H1 (cell line): ENCODE measurements at regions of chr17 and their contacts with region 1.

Region 1: DNA sequence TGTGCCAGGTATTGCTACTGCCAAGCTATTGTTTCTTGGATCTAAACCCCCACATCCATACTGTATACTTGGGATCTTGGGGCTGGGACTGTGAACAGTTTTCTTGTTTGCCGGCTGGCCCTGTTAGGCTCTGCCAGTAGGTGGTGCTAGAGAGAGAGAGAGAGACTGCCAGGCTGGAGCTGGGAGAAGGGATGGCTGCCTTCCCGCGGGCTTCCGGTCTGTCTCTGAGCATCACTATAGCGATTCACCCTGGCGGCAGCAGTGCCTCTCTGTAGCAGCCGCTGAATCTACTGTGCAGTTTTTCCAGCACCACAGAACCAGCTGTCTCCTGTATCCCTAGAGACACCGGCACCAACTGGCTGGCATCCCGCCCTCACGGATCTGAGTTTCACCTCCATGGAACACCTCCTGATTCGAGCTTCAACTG is 201.2 kb downstream of the UTP18 start:
- DNase-seq: peak; percentile 29 to 85
- H3K4me3 ChIP-seq: no peak overlapping the region
- H3K27ac ChIP-seq: no peak overlapping the region
- H3K4me1 ChIP-seq: no peaks in the 10 kb centered on the region
- H3K27me3 ChIP-seq: no peaks in the 10 kb centered on the region
- CTCF ChIP-seq: peak; percentile 80 to 92 (median 85)
- EP300 ChIP-seq: no peak
- POLR2A ChIP-seq: no peak
- RAD21 ChIP-seq: peak; percentile 59 to 72

Region 2: GRCh38 chr17:51298508-51299371 is 162.9 kb before region 1 on chr17:
- CTCF ChIA-PET with region 1: interaction called, 17 read pairs
- POLR2A ChIA-PET with region 1: no interaction called
- DNase-seq: no peak
- H3K4me3 ChIP-seq: no peak overlapping the region
- H3K27ac ChIP-seq: no peak overlapping the region
- H3K4me1 ChIP-seq: peaks cover 0 to 11% (median 3%) of the 10 kb centered on the region in 4 experiments; a peak in 2 of 7 replicates
- H3K27me3 ChIP-seq: no peaks in the 10 kb centered on the region
- CTCF ChIP-seq: peak in 2 of 3 experiments; percentile 68 to 83; a peak in 3 of 4 replicates
- EP300 ChIP-seq: no peak
- POLR2A ChIP-seq: 0 out of 3 replicates have a peak, but pooled peaks of 1 of the 2 experiments have one; percentile 8
- RAD21 ChIP-seq: peak; percentile 80 to 87

Region 3: GRCh38 chr17:51378059-51378458 is 83.5 kb before region 1 on chr17:
- CTCF ChIA-PET with region 1: no interaction called
- POLR2A ChIA-PET with region 1: no interaction called
- DNase-seq: no peak
- H3K4me3 ChIP-seq: no peak overlapping the region
- H3K27ac ChIP-seq: no peak overlapping the region
- H3K4me1 ChIP-seq: peaks cover 0 to 10% (median 7%) of the 10 kb centered on the region in 4 experiments; a peak in 3 of 7 replicates
- H3K27me3 ChIP-seq: no peaks in the 10 kb centered on the region
- CTCF ChIP-seq: no peak
- EP300 ChIP-seq: no peak
- POLR2A ChIP-seq: no peak
- RAD21 ChIP-seq: no peak

Region 4: DNA sequence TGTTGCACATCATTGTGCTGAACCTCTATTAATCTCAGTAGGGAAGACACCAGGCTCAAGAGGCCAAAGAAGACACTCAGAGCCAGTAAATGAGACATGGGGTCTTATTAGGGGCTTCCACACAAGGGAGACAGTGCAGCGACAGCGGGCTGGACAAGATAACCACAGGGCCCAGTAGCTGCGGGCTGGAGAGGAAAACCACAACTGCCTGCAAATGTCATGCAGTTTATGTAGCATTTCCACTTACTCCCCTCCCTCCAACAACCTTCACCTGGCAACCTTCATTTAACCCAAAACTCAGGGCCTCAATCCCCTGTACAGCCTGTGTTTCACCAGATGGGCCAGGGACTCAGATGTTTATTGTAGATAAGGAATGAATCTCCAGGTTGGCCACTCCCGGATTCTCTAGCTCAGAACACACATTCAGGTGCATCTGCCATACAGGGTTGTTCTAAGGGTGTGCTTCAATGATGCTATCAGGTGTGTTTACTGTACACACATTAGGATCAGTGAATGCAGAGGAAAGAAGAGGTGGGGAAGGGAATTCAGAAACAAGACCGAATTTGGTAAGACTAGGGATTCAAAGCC is 15.6 kb before region 1 on chr17:
- CTCF ChIA-PET with region 1: interaction called, 11 read pairs
- POLR2A ChIA-PET with region 1: no interaction called
- DNase-seq: no peak
- H3K4me3 ChIP-seq: no peak overlapping the region
- H3K27ac ChIP-seq: no peak overlapping the region
- H3K4me1 ChIP-seq: no peaks in the 10 kb centered on the region
- H3K27me3 ChIP-seq: no peaks in the 10 kb centered on the region
- CTCF ChIP-seq: no peak
- EP300 ChIP-seq: no peak
- POLR2A ChIP-seq: no peak
- RAD21 ChIP-seq: no peak

Region 5: GRCh38 chr17:51479303-51479702 is 17.7 kb after region 1 on chr17:
- CTCF ChIA-PET with region 1: interaction called, 45 read pairs
- POLR2A ChIA-PET with region 1: no interaction called
- DNase-seq: no peak
- H3K4me3 ChIP-seq: no peak overlapping the region
- H3K27ac ChIP-seq: no peak overlapping the region
- H3K4me1 ChIP-seq: peaks cover 0 to 2% (median 0%) of the 10 kb centered on the region in 4 experiments; a peak in 2 of 7 replicates
- H3K27me3 ChIP-seq: peaks cover 0 to 1% (median 0%) of the 10 kb centered on the region in 4 experiments; a peak in 1 of 7 replicates
- CTCF ChIP-seq: no peak
- EP300 ChIP-seq: no peak
- POLR2A ChIP-seq: no peak
- RAD21 ChIP-seq: no peak

Region 6: GRCh38 chr17:51540151-51540550 is 78.6 kb after region 1 on chr17:
- CTCF ChIA-PET with region 1: interaction called, 13 read pairs
- POLR2A ChIA-PET with region 1: no interaction called
- DNase-seq: no peak
- H3K4me3 ChIP-seq: no peak overlapping the region
- H3K27ac ChIP-seq: no peak overlapping the region
- H3K4me1 ChIP-seq: peaks cover 0 to 4% (median 0%) of the 10 kb centered on the region in 4 experiments; a peak in 1 of 7 replicates
- H3K27me3 ChIP-seq: no peaks in the 10 kb centered on the region
- CTCF ChIP-seq: peak in 1 of 3 experiments; percentile 15; a peak in 1 of 4 replicates
- EP300 ChIP-seq: no peak
- POLR2A ChIP-seq: no peak
- RAD21 ChIP-seq: peak; percentile 39 to 50

Region 7: GRCh38 chr17:51572115-51572514 is 110.5 kb after region 1 on chr17:
- CTCF ChIA-PET with region 1: no interaction called
- POLR2A ChIA-PET with region 1: no interaction called
- DNase-seq: no peak
- H3K4me3 ChIP-seq: no peak overlapping the region
- H3K27ac ChIP-seq: no peak overlapping the region
- H3K4me1 ChIP-seq: no peaks in the 10 kb centered on the region
- H3K27me3 ChIP-seq: no peaks in the 10 kb centered on the region
- CTCF ChIP-seq: no peak
- EP300 ChIP-seq: no peak
- POLR2A ChIP-seq: no peak
- RAD21 ChIP-seq: no peak

Region 8: GRCh38 chr17:51764387-51764972 is 302.9 kb after region 1 on chr17:
- CTCF ChIA-PET with region 1: no interaction called
- POLR2A ChIA-PET with region 1: no interaction called
- DNase-seq: peak; percentile 61 to 68
- H3K4me3 ChIP-seq: no peak overlapping the region
- H3K27ac ChIP-seq: no peak overlapping the region
- H3K4me1 ChIP-seq: no peaks in the 10 kb centered on the region
- H3K27me3 ChIP-seq: no peaks in the 10 kb centered on the region
- CTCF ChIP-seq: peak; percentile 68 to 96 (median 88)
- EP300 ChIP-seq: no peak
- POLR2A ChIP-seq: no peak
- RAD21 ChIP-seq: peak; percentile 98 to 99